Natural killer cell (primary cell): ENCODE measurements at regions of chr14 and their contacts with region 1.

Region 1: DNA sequence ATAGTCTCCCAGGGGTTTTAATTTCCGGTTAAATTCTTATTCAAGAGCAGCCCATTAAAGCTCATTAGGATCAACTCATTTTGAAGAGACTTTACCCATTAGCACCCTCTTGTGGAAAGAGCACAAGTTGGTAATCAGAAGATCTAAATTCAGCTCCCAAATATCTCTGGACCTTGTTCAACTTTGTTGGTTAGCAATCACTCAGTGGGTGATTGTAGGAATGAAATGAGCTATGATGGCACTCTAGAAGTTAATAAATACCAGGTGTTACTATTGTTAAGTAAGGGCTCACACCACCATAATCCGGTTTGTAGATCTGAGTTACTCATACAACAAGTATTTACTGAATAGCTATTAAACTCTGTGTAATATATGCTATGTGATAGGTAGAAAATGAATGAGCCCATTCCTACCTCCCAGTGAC is 42.9 kb downstream of the TRIP11 start:
- DNase-seq: peak in 1 of 2 donors; percentile 71
- ATAC-seq: peak in 2 of 3 donors; percentile 64 to 65
- H3K4me3 ChIP-seq: no peak overlapping the region
- H3K4me3 Mint-ChIP-seq: no peak overlapping the region
- H3K27ac ChIP-seq: no peak overlapping the region
- H3K27ac Mint-ChIP-seq: peak overlapping the region; percentile 69 to 84
- H3K4me1 ChIP-seq: no peaks in the 10 kb centered on the region
- H3K4me1 Mint-ChIP-seq: peaks cover 22 to 35% of the 10 kb centered on the region in 2 donors
- H3K27me3 ChIP-seq: no peaks in the 10 kb centered on the region
- H3K27me3 Mint-ChIP-seq: no peaks in the 10 kb centered on the region
- CTCF ChIP-seq: peak; percentile 66

Region 2: DNA sequence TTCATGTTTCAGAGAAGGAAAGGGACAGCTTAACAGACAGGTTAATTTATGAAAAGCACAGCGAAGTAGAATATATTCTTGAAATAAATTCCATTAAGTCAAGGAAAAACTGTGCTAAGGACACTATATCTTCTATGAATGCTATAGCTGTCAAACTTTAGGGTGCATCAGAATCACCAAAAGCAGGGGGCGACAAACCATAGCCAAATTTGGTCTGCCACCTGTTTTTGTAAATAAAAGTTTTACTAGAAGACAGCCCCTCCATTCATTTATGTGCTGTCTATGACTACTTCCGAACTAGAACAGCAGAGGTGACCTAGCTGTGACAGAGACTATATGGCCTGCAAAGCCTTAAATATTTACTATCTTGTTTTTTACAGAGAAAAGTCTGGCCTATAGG is 512.8 kb before region 1 on chr14:
- intact Hi-C with region 1: loop called (anchors 2 kb)
- DNase-seq: peak in 1 of 2 donors; percentile 48
- ATAC-seq: peak in 1 of 3 donors; percentile 29
- H3K4me3 ChIP-seq: no peak overlapping the region
- H3K4me3 Mint-ChIP-seq: no peak overlapping the region
- H3K27ac ChIP-seq: no peak overlapping the region
- H3K27ac Mint-ChIP-seq: peak overlapping the region; percentile 48 to 68
- H3K4me1 ChIP-seq: peaks cover 2% of the 10 kb centered on the region
- H3K4me1 Mint-ChIP-seq: peaks cover 41 to 52% of the 10 kb centered on the region in 2 donors
- H3K27me3 ChIP-seq: no peaks in the 10 kb centered on the region
- H3K27me3 Mint-ChIP-seq: no peaks in the 10 kb centered on the region
- CTCF ChIP-seq: no peak